Activated CD4-positive, alpha-beta T cell treated with anti-CD3 and anti-CD28 coated beads for 36 hours (primary cell): ENCODE measurements at regions of chr10 and their contacts with region 1.

Region 1: DNA sequence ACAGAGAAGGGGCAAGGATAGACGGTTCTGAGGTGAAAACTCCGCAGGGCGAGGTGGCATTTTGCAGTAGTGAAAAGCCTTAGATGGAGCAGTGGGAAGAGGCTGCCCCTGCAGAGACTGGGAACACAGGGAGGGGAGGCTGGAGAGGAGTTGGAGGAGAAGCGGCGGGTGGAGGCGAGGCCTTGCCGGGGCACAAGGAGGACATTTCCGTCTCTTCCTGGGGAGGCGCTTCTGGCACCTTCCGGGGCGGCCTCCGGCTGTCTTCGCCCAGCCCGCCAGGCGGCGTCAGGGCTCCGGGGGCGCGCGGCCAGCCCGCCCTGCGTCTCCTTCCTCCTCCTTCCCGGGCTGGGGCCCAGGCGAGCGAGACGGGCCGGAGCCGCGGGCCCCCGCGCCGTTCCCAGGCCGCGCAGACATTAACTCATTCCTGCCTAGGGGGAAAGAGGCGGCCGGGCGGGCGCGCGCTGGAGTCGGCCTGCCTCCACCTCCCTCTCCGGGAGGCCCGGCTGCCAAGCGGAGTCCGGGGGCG is 42.7 kb downstream of the LDB3 start:
- DNase-seq: peak; percentile 91
- ATAC-seq: peak; percentile 93
- H3K4me3 Mint-ChIP-seq: peak overlapping the region; percentile 75
- H3K27ac Mint-ChIP-seq: peak overlapping the region; percentile 96
- H3K4me1 Mint-ChIP-seq: peaks cover 12% of the 10 kb centered on the region
- H3K27me3 Mint-ChIP-seq: no peaks in the 10 kb centered on the region

Region 2: GRCh38 chr10:86399879-86400704 is 311.0 kb before region 1 on chr10:
- CTCF ChIA-PET with region 1: interaction called, 3 read pairs
- POLR2A ChIA-PET with region 1: no interaction called
- intact Hi-C with region 1: loop called in 1 of 2 experiments (anchors 1 kb)
- DNase-seq: peak; percentile 98
- ATAC-seq: peak; percentile 94
- H3K4me3 Mint-ChIP-seq: peak overlapping the region; percentile 83
- H3K27ac Mint-ChIP-seq: peak overlapping the region; percentile 89
- H3K4me1 Mint-ChIP-seq: peaks cover 21% of the 10 kb centered on the region
- H3K27me3 Mint-ChIP-seq: no peaks in the 10 kb centered on the region

Region 3: GRCh38 chr10:86535057-86535882 is 175.8 kb before region 1 on chr10:
- CTCF ChIA-PET with region 1: no interaction called
- POLR2A ChIA-PET with region 1: no interaction called
- intact Hi-C with region 1: loop called in 1 of 2 experiments (anchors 5 kb)
- DNase-seq: peak; percentile 60
- ATAC-seq: peak; percentile 67
- H3K4me3 Mint-ChIP-seq: peak overlapping the region; percentile 69
- H3K27ac Mint-ChIP-seq: peak overlapping the region; percentile 80
- H3K4me1 Mint-ChIP-seq: peaks cover 25% of the 10 kb centered on the region
- H3K27me3 Mint-ChIP-seq: no peaks in the 10 kb centered on the region

Region 4: GRCh38 chr10:86755740-86756510 is 44.9 kb after region 1 on chr10:
- CTCF ChIA-PET with region 1: interaction called, 5 read pairs
- POLR2A ChIA-PET with region 1: no interaction called
- intact Hi-C with region 1: loop called (anchors 1 kb)
- DNase-seq: peak; percentile 93
- ATAC-seq: peak; percentile 96
- H3K4me3 Mint-ChIP-seq: peak overlapping the region; percentile 85
- H3K27ac Mint-ChIP-seq: peak overlapping the region; percentile 72
- H3K4me1 Mint-ChIP-seq: peaks cover 33% of the 10 kb centered on the region
- H3K27me3 Mint-ChIP-seq: peaks cover 26% of the 10 kb centered on the region

Region 5: GRCh38 chr10:86936661-86937501 is 225.8 kb after region 1 on chr10:
- CTCF ChIA-PET with region 1: no interaction called
- POLR2A ChIA-PET with region 1: no interaction called
- intact Hi-C with region 1: loop called in 1 of 2 experiments (anchors 1 kb)
- DNase-seq: no peak
- ATAC-seq: no peak
- H3K4me3 Mint-ChIP-seq: no peak overlapping the region
- H3K27ac Mint-ChIP-seq: no peak overlapping the region
- H3K4me1 Mint-ChIP-seq: no peaks in the 10 kb centered on the region
- H3K27me3 Mint-ChIP-seq: no peaks in the 10 kb centered on the region

Region 6: GRCh38 chr10:87094373-87095235 is 383.6 kb after region 1 on chr10 and contains the starts of genes GLUD1 and SHLD2:
- CTCF ChIA-PET with region 1: no interaction called
- POLR2A ChIA-PET with region 1: interaction called, 3 read pairs
- intact Hi-C with region 1: loop called (anchors 1 kb)
- DNase-seq: peak; percentile 94
- ATAC-seq: peak; percentile 80
- H3K4me3 Mint-ChIP-seq: peak within 1 kb of the TSS; percentile 85
- H3K27ac Mint-ChIP-seq: peak within 1 kb of the TSS; percentile 91
- H3K4me1 Mint-ChIP-seq: peaks cover 34% of the 10 kb centered on the region
- H3K27me3 Mint-ChIP-seq: no peaks in the 10 kb centered on the region
- total RNA-seq, gene GLUD1: 98.4 to 125 TPM
- total RNA-seq, gene SHLD2: 29.7 to 29.9 TPM